Breast epithelium (tissue), 4 donors: ENCODE measurements at regions of chrX and their contacts with region 1.

Region 1: DNA sequence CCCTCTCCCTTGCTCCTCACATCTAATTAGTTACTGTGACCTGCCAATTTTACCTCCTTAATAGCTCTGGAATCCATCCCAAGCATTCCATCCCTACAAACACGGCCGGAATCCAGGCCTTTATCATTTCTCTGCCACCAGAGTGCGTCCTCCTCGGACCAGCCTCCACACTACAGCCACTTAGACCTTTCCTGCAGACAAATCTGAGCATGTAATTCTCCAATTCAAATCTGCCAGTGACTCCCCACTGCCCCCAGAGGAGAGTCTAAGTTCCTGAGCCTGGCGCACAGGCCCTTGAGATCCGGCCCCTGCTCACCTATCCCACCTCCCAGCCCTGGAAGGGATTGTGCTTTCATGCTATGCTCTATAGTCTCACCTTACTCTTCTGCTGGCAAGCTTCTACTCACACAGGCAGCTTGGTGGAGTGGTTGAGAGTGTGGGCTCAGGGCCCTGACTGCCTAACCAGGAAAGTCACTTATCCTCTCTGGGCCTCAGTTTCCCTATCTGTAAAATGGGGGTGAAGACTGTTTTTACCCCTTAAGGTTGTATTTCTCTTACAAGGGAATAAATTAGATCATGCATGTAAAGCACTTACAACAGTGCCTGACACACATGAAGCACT is 31.2 kb downstream of the PJA1 start:
- DNase-seq: no peak
- H3K4me3 ChIP-seq: no peak overlapping the region
- H3K27ac ChIP-seq: no peak overlapping the region
- H3K4me1 ChIP-seq: peaks cover 0 to 4% of the 10 kb centered on the region in 2 donors
- H3K27me3 ChIP-seq: peaks cover 0 to 97% of the 10 kb centered on the region in 2 donors
- CTCF ChIP-seq: peak in 2 of 3 donors; percentile 18 to 25
- POLR2A ChIP-seq: no peak

Region 2: DNA sequence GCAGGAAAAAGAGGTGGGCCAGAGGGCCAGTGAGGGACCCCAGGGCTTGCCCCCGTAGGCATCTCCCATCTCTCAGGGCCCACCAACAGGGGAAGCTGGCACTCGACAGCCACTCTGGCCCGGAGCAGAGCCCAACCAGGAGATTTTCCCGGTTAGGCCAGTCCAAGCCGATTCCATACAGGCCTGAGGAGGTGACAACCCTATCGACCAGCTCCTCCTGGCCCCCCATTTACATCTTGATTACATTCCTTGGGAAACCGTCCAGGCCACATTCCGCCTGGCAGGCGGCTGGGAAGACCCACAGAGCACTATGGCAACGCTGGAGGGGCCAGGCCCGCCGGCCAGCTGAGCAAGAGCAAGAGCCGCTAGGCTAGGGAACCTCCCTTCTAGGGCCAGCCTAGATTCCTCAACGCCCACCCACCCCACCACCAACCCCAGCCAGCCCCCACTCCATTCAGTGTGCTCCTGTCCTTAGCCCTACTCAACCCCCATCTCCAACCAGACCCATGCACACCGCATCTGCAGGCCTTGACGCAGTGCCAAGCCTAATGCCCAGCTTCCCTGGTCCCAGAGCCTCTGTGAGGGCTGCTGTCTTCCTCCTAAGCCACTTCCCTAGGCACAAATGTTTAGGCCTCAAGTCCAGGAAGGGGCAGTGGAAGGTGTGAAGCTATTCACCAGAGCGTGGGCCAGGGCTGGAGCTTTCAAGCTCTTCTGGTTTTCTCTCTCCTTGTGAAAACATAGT is 144.0 kb before region 1 on chrX:
- intact Hi-C with region 1: no loop called
- DNase-seq: no peak
- H3K4me3 ChIP-seq: no peak overlapping the region
- H3K27ac ChIP-seq: peak overlapping the region in 1 of 2 donors; percentile 54
- H3K4me1 ChIP-seq: no peaks in the 10 kb centered on the region
- H3K27me3 ChIP-seq: peaks cover 0 to 57% of the 10 kb centered on the region in 2 donors
- CTCF ChIP-seq: no peak
- POLR2A ChIP-seq: no peak

Region 3: DNA sequence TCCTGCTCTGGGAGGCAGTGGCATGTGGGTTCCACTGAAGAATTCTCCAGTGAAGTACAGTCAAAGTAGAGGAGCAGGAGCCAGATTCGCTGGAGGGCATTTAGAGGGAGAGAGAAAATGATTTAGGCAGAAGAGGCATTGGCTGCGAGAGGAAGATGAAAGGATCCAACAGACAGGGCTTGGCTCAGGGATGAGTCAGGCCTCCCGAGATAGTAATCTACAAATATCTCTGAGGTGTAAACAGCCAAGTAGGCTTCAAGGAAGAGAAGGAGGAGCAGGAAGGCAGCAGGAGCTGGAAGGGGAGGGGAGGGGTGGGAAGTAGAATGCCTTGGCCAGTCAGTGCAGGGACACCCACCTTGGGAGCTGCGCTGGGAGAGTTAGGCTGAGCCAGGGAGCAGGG is 24.3 kb before region 1 on chrX:
- intact Hi-C with region 1: loop called (anchors 1 kb)
- DNase-seq: peak; percentile 56 to 62
- H3K4me3 ChIP-seq: no peak overlapping the region
- H3K27ac ChIP-seq: peak overlapping the region in 1 of 2 donors; percentile 62
- H3K4me1 ChIP-seq: no peaks in the 10 kb centered on the region
- H3K27me3 ChIP-seq: peaks cover 0 to 75% of the 10 kb centered on the region in 2 donors
- CTCF ChIP-seq: no peak
- POLR2A ChIP-seq: no peak